Activated CD4-positive, alpha-beta T cell treated with anti-CD3 and anti-CD28 coated beads, Interleukin-2, amount 10 ng/mL, durations not matched to agents 24 days and 14 days (primary cell): ENCODE measurements at regions of chr3 and their contacts with region 1.

Region 1: DNA sequence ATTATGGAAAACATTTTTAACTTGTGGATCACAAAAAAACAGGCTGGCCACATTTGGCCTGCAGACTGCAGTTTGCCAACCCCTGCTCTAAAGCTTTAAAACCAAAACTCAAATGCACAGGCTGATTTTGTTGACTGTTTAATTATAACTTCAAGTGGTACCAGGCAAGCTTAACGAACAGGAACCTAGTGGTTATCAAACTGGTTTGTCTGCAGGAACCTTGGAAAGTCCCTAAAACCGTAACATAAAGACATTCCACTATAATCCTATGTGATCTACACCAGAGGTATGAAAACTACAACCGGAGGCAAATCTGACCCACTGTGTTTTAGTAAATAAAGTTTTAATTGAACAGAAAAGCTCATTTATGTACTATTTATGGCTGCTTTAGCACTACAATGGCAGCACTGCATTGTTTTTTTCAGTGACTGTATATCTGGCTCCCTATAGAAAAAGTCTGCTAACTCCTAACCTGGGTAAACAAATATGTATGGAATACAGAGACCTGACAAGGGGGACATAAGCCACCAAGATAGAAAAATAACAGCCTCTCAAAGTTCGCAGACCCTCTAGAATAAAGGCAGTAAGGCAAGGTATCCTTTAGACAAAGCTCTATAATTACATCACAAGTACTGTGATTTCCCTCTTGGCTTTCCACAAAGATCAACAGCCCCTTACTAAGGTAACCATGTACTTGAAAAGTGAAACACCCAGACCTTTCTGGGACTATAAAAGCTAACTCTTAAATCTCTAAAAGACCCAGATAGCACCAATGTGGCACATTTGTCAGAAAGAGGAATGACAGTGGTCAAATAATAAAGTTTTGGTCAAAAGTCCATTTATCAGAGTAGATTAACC is 52.1 kb downstream of the TBL1XR1 start:
- DNase-seq: peak; percentile 81
- H3K4me3 Mint-ChIP-seq: peak overlapping the region; percentile 72
- H3K27ac Mint-ChIP-seq: peak overlapping the region; percentile 82
- H3K4me1 Mint-ChIP-seq: peaks cover 54% of the 10 kb centered on the region
- H3K27me3 Mint-ChIP-seq: no peaks in the 10 kb centered on the region

Region 2: GRCh38 chr3:177057768-177058167 is 87.4 kb before region 1 on chr3:
- intact Hi-C with region 1: loop called (anchors 5 kb)
- DNase-seq: peak; percentile 76
- H3K4me3 Mint-ChIP-seq: no peak overlapping the region
- H3K27ac Mint-ChIP-seq: no peak overlapping the region
- H3K4me1 Mint-ChIP-seq: peaks cover 19% of the 10 kb centered on the region
- H3K27me3 Mint-ChIP-seq: no peaks in the 10 kb centered on the region

Region 3: DNA sequence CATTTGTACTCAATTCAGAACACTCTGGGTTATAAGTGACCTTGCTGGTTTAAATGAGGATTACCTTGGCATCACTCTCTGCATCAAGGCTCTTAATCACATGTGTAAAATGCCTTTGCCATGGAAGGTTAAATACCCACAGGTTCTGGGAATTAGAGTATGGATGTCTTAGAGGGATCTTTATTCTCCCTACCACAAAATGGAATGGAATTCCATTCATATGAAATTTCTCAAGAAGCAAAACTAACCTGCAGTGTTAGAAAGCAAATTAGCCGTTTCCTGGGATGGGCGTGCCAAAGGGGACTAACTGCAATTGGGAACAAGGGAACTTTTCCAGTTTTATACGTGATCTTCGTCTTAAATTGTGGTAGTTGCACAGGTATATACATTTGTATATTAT is 12.3 kb after region 1 on chr3:
- intact Hi-C with region 1: loop called (anchors 2 kb)
- DNase-seq: no peak
- H3K4me3 Mint-ChIP-seq: no peak overlapping the region
- H3K27ac Mint-ChIP-seq: no peak overlapping the region
- H3K4me1 Mint-ChIP-seq: peaks cover 32% of the 10 kb centered on the region
- H3K27me3 Mint-ChIP-seq: no peaks in the 10 kb centered on the region

Region 4: DNA sequence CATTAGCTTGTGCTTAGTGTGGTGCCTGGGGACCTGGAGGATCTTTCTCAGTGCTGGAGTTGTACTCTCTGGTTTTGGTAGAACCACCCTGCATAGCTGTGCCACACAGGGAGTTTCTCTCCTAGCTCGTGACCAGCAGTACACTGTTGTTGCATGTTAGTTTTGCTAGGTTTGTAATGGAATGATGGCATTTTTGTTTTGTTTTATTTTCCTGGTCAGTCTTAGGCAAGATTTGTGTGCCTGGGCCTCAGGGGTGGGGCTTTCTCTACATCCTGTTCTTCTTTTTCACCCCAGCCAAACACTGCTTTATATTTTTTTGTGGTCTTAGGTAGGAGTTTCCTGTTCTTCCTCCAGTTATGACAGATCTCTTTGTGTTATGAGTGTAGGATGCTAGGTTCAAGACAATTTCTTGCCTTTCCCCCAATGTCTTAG is 856.5 kb after region 1 on chr3:
- intact Hi-C with region 1: loop called (anchors 10 kb)
- DNase-seq: peak; percentile 77
- H3K4me3 Mint-ChIP-seq: peak overlapping the region; percentile 63
- H3K27ac Mint-ChIP-seq: peak overlapping the region; percentile 91
- H3K4me1 Mint-ChIP-seq: peaks cover 36% of the 10 kb centered on the region
- H3K27me3 Mint-ChIP-seq: no peaks in the 10 kb centered on the region